WTC11 (cell line): ENCODE measurements at regions of chr12 and their contacts with region 1.

Region 1: GRCh38 chr12:8823565-8824300 is 1.3 kb downstream of the A2ML1 start:
- DNase-seq: peak; percentile 79
- ATAC-seq: peak; percentile 65
- H3K4me3 Mint-ChIP-seq: peak overlapping the region; percentile 64
- H3K27ac Mint-ChIP-seq: peak overlapping the region; percentile 90
- H3K4me1 Mint-ChIP-seq: peaks cover 60% of the 10 kb centered on the region
- H3K27me3 Mint-ChIP-seq: no peaks in the 10 kb centered on the region; the same call in 1 of the 2 replicates
- CTCF ChIP-seq: peak; percentile 76

Region 2: GRCh38 chr12:8655421-8655820 is 168.3 kb before region 1 on chr12:
- CTCF ChIA-PET with region 1: interaction called, 41 read pairs
- POLR2A ChIA-PET with region 1: interaction called, 10 read pairs
- DNase-seq: no peak
- ATAC-seq: no peak
- H3K4me3 Mint-ChIP-seq: no peak overlapping the region
- H3K27ac Mint-ChIP-seq: no peak overlapping the region; the same call in 1 of the 2 replicates
- H3K4me1 Mint-ChIP-seq: peaks cover 9% of the 10 kb centered on the region
- H3K27me3 Mint-ChIP-seq: no peaks in the 10 kb centered on the region
- CTCF ChIP-seq: no peak

Region 3: GRCh38 chr12:8687846-8688601 is 135.7 kb before region 1 on chr12:
- CTCF ChIA-PET with region 1: interaction called, 16 read pairs
- POLR2A ChIA-PET with region 1: interaction called, 4 read pairs
- DNase-seq: no peak
- ATAC-seq: peak; percentile 62
- H3K4me3 Mint-ChIP-seq: no peak overlapping the region
- H3K27ac Mint-ChIP-seq: no peak overlapping the region
- H3K4me1 Mint-ChIP-seq: peaks cover 40% of the 10 kb centered on the region
- H3K27me3 Mint-ChIP-seq: no peaks in the 10 kb centered on the region
- CTCF ChIP-seq: no peak

Region 4: GRCh38 chr12:8781381-8782127 is 42.2 kb before region 1 on chr12:
- CTCF ChIA-PET with region 1: interaction called, 15 read pairs
- POLR2A ChIA-PET with region 1: no interaction called
- DNase-seq: no peak
- ATAC-seq: no peak
- H3K4me3 Mint-ChIP-seq: no peak overlapping the region
- H3K27ac Mint-ChIP-seq: peak overlapping the region; percentile 30
- H3K4me1 Mint-ChIP-seq: peaks cover 42% of the 10 kb centered on the region
- H3K27me3 Mint-ChIP-seq: no peaks in the 10 kb centered on the region; the same call in 1 of the 2 replicates
- CTCF ChIP-seq: no peak

Region 5: GRCh38 chr12:8860165-8860961 is 36.6 kb after region 1 on chr12:
- CTCF ChIA-PET with region 1: interaction called, 57 read pairs
- POLR2A ChIA-PET with region 1: interaction called, 5 read pairs
- DNase-seq: peak; percentile 64
- ATAC-seq: peak; percentile 98
- H3K4me3 Mint-ChIP-seq: no peak overlapping the region
- H3K27ac Mint-ChIP-seq: no peak overlapping the region
- H3K4me1 Mint-ChIP-seq: peaks cover 11% of the 10 kb centered on the region
- H3K27me3 Mint-ChIP-seq: no peaks in the 10 kb centered on the region
- CTCF ChIP-seq: peak; percentile 70